OCI-LY7 (cell line): ENCODE measurements at regions of chr11 and their contacts with region 1.

Region 1: GRCh38 chr11:13784855-13785254 is 116.4 kb downstream of the FAR1 start:
- DNase-seq: no peak
- H3K4me3 ChIP-seq: no peak overlapping the region
- H3K27ac ChIP-seq: no peak overlapping the region
- H3K4me1 ChIP-seq: peaks cover 8% of the 10 kb centered on the region
- CTCF ChIP-seq: no peak

Region 2: DNA sequence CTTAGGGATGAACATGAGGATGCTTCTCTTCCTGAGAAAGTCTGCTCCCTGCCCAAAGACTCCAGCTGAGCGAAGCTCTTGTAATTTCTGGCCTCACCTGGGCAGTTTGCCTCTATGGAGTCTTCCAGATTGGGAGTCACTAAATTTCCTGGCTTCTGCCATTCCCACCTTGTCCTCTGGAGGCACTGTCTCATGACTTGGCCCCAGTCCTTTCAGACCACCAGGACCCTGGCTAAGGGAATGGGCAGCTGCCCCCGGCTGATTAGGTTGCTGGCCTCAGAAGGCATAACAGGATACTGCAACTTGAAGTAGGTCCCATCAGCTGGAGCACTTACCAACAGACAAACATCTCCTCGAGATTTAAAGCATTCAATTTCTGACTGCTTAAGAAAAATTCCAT is 49.6 kb after region 1 on chr11:
- CTCF ChIA-PET with region 1: no interaction called
- POLR2A ChIA-PET with region 1: no interaction called
- intact Hi-C with region 1: loop called (anchors 5 kb)
- DNase-seq: peak; percentile 40
- H3K4me3 ChIP-seq: no peak overlapping the region
- H3K27ac ChIP-seq: no peak overlapping the region
- H3K4me1 ChIP-seq: peaks cover 43% of the 10 kb centered on the region
- CTCF ChIP-seq: peak; percentile 78